SK-N-SH (cell line): ENCODE measurements at regions of chr10 and their contacts with region 1.

Region 1: DNA sequence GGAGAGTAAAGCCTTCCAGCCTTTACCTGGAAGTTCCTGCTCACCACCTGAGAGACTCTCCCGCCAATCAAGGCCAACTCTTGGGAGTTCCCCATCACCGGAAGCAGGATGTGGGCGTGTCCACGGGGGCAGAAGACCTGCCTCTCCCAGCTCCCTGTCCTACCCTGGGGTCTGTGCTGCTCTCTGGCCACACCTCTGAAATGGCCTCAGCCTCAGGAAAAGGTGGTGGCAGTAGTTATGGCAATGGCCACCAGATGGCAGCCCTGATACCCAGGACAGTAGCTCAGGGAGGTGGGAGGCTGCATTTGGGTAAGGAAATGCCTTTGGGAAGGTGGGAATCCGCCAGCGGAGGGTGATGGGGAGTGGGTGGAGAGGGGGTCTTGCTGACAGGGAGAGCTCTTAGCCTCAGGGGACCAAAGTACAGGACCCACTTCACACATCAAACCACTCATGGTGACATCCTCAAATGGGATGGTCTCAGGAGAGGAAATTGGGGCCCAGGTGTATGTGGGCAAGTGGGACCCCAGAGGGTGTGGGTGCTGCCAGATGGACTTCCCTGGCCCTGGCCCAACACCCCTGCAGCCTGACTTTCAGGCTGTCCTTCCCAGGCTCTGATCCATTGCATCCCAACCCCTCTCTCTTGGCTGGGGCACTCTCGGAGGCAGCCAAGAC is 33.9 kb downstream of the KAZALD1 start:
- DNase-seq: peak; percentile 85
- H3K4me3 ChIP-seq: peak overlapping the region in 1 of 2 experiments; percentile 40; a peak in 1 of 4 replicates
- H3K27ac ChIP-seq: no peak overlapping the region
- H3K4me1 ChIP-seq: peaks cover 0 to 10% of the 10 kb centered on the region in 2 experiments; a peak in 1 of 4 replicates
- H3K27me3 ChIP-seq: peaks cover 34% of the 10 kb centered on the region; the same call in 1 of the 2 replicates
- CTCF ChIP-seq: peak; percentile 81
- EP300 ChIP-seq: no peak
- RAD21 ChIP-seq: peak; percentile 72

Region 2: GRCh38 chr10:100912605-100913469 is 182.8 kb before region 1 on chr10 and contains the start of gene SLF2:
- CTCF ChIA-PET with region 1: no interaction called
- POLR2A ChIA-PET with region 1: no interaction called
- DNase-seq: peak; percentile 99
- H3K4me3 ChIP-seq: peak within 1 kb of the TSS; percentile 78 to 99
- H3K27ac ChIP-seq: peak within 1 kb of the TSS; percentile 76 to 95
- H3K4me1 ChIP-seq: peaks cover 17 to 23% of the 10 kb centered on the region in 2 experiments; a peak in 3 of 4 replicates
- H3K27me3 ChIP-seq: no peaks in the 10 kb centered on the region
- CTCF ChIP-seq: no peak
- EP300 ChIP-seq: no peak
- RAD21 ChIP-seq: no peak
- polyA plus RNA-seq, gene SLF2: 6.3 and 7.5 TPM in 2 replicates

Region 3: DNA sequence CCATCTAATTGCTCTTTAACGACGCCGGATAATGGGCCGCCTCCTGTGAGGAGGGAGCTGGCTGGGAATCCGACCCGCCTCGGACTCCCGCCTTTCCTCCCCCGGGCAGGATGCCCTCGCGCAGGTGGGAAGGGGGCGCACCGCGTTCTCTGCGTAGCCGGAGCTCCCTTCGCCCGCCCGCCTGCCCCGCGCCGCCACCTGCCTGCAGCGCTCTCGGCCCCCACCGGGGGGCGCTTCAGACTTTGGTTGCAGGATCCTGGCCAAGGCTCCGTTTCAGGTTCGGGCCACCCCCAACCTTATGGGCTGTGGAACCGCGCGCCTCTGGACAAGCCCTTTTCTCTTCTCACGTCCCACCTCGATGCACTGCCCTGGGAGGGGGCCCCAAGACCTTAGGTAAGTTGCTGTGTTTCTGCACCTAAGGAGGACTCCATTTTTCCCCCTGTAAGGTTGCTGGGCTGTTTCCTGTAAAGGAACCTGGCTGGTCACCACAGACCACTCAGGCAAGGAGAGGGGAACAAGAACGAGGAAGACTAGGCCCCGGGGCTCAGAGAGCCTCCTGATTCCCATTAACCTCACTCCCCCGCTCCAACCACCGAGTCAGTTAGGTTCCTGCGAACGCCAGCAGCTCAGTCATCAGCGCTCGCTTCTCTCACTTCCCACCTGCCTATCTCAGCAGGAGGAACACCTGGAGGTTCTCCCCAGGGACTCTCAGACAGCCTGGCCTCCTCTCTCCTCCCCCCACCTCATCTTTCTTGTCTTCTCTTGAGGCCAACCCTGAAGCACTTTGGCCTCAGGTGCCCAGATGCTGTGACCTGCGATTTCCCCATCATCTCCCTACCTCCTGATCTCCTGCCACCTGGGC is 45.2 kb before region 1 on chr10:
- CTCF ChIA-PET with region 1: interaction called, 11 read pairs
- POLR2A ChIA-PET with region 1: no interaction called
- DNase-seq: peak; percentile 87
- H3K4me3 ChIP-seq: peak overlapping the region; percentile 32 to 33; a peak in 3 of 4 replicates
- H3K27ac ChIP-seq: no peak overlapping the region
- H3K4me1 ChIP-seq: peaks cover 4 to 5% of the 10 kb centered on the region in 2 experiments; a peak in 1 of 4 replicates
- H3K27me3 ChIP-seq: no peaks in the 10 kb centered on the region
- CTCF ChIP-seq: peak; percentile 75
- EP300 ChIP-seq: no peak
- RAD21 ChIP-seq: peak; percentile 42

Region 4: GRCh38 chr10:101067356-101068083 is 28.2 kb before region 1 on chr10:
- CTCF ChIA-PET with region 1: interaction called, 64 read pairs
- POLR2A ChIA-PET with region 1: no interaction called
- DNase-seq: peak; percentile 87
- H3K4me3 ChIP-seq: peak overlapping the region; percentile 57 to 74
- H3K27ac ChIP-seq: peak overlapping the region in 1 of 2 experiments; percentile 70; a peak in 1 of 4 replicates
- H3K4me1 ChIP-seq: peaks cover under 1 to 19% of the 10 kb centered on the region in 2 experiments; a peak in 1 of 4 replicates
- H3K27me3 ChIP-seq: no peaks in the 10 kb centered on the region
- CTCF ChIP-seq: peak; percentile 84
- EP300 ChIP-seq: no peak
- RAD21 ChIP-seq: peak; percentile 86

Region 5: GRCh38 chr10:101080933-101081931 is 14.4 kb before region 1 on chr10:
- CTCF ChIA-PET with region 1: interaction called, 116 read pairs
- POLR2A ChIA-PET with region 1: no interaction called
- DNase-seq: no peak
- H3K4me3 ChIP-seq: no peak overlapping the region
- H3K27ac ChIP-seq: no peak overlapping the region
- H3K4me1 ChIP-seq: peaks cover 0 to 21% of the 10 kb centered on the region in 2 experiments; a peak in 1 of 4 replicates
- H3K27me3 ChIP-seq: peaks cover 32% of the 10 kb centered on the region; the same call in 1 of the 2 replicates
- CTCF ChIP-seq: no peak
- EP300 ChIP-seq: no peak; a peak in 1 of 4 replicates
- RAD21 ChIP-seq: no peak

Region 6: GRCh38 chr10:101120884-101121653 is 25.4 kb after region 1 on chr10:
- CTCF ChIA-PET with region 1: interaction called, 56 read pairs
- POLR2A ChIA-PET with region 1: interaction called, 3 read pairs
- DNase-seq: peak; percentile 9
- H3K4me3 ChIP-seq: no peak overlapping the region
- H3K27ac ChIP-seq: no peak overlapping the region
- H3K4me1 ChIP-seq: peaks cover 0 to 19% of the 10 kb centered on the region in 2 experiments; a peak in 1 of 4 replicates
- H3K27me3 ChIP-seq: peaks cover 88% of the 10 kb centered on the region
- CTCF ChIP-seq: no peak
- EP300 ChIP-seq: no peak
- RAD21 ChIP-seq: no peak

Region 7: GRCh38 chr10:101161494-101162299 is 66.0 kb after region 1 on chr10:
- CTCF ChIA-PET with region 1: interaction called, 13 read pairs
- POLR2A ChIA-PET with region 1: no interaction called
- DNase-seq: peak; percentile 77
- H3K4me3 ChIP-seq: peak overlapping the region; percentile 48 to 64
- H3K27ac ChIP-seq: no peak overlapping the region
- H3K4me1 ChIP-seq: peaks cover 0 to 10% of the 10 kb centered on the region in 2 experiments; a peak in 1 of 4 replicates
- H3K27me3 ChIP-seq: peaks cover 33% of the 10 kb centered on the region
- CTCF ChIP-seq: peak; percentile 96
- EP300 ChIP-seq: no peak
- RAD21 ChIP-seq: peak; percentile 85